ENCODE measurements at regions of chr15 and their contacts with region 1.

Region 1: DNA sequence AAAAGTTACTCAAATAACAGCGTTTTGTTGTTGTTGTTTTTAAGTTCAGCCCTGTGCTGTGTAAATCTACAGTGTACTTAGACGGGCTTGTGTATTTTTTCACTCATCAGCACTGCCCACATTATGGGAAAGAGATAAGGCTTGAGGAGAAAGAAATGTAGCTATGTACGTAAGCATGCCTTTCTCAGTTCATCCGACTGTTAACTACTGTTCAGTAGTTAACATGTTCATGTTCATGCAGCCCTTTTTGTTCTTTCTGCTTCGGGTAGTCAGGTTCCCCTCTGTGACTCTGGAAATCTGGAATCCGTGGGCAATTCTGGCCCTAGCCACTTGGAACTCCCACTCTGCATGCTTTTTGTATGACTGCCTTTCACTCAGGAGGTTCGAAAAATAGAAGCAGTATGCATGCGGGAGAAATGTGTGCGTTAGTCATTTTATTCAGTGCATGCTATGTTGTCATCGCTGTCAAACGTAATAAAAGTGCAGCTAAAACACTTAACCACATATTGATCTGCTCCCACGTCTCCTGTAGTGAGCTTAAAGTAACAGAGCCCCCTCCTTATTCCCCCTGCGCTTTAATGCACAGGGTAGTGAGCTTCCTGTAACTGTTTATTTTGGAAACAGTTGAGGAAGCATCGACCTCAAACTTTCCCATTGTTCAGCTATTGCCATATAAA is 283.1 kb upstream of the NR2F2 start:
- H3K4me3 Mint-ChIP-seq: no peak overlapping the region
- H3K27ac Mint-ChIP-seq: no peak overlapping the region
- H3K4me1 Mint-ChIP-seq: peaks cover 35% of the 10 kb centered on the region
- H3K27me3 Mint-ChIP-seq: peaks cover 23% of the 10 kb centered on the region

Region 2: DNA sequence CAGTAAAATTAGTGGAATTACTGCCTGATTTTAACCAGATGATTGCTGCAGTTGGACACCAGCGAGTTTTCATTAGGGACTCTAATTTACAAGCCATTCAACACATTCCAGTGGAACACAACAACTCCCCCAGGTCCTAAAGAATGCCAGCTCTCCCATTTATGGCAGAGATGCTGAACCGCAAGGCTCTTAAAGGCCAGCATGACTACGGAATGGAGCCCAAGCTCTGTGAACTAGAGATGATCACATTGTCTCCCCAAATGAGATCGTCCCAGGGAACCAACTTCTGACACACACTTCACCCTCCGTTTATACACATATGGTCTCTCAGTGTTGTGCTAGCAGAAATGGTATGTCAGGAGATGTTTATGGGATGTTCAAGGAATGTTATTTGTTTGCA is 163.1 kb before region 1 on chr15:
- intact Hi-C with region 1: loop called (anchors 10 kb)
- H3K4me3 Mint-ChIP-seq: no peak overlapping the region
- H3K27ac Mint-ChIP-seq: no peak overlapping the region
- H3K4me1 Mint-ChIP-seq: peaks cover 18% of the 10 kb centered on the region
- H3K27me3 Mint-ChIP-seq: peaks cover 5% of the 10 kb centered on the region

Measured in dendritic cell treated with granulocyte-macrophage colony-stimulating factor and Interleukin-4, amounts not matched to agents 40 ng/mL and 50 ng/mL, for 4 days (primary cell).